ENCODE measurements at regions of chr6 and their contacts with region 1.

Region 1: DNA sequence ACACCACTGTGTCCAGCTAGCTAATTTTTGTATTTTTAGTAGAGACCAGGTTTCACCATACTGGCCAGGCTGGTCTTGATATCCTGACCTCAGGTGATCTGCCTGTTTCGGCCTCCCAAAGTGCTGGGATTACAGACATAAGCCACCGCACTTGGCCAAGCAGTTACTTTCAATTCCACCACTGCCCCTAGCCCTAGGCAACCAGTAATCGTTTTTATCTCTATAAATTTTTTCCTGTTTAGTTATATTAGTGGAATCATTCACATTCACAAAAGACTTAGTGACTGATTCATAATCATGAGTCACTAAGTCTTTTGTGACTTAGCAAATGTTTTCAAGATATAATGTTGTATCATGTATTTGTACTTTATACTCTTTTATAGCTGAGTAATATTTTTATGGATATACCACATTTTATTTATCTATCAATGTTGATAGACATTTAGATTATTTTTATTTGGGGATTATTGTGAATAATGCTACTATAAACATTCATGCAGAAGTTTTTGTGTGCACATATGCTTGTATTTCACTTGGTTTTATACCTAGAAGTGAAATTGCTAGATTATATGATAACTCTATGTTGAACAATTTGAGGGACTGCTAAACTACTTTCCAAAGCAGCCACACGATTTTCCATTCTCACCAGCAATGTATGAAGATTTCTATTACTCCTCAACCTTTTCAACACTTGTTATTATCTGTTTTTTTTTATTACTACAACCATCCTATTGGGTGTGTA is 421.4 kb upstream of the ID4 start:
- DNase-seq: peak; percentile 47
- ATAC-seq: peak; percentile 50
- H3K4me3 ChIP-seq: peak overlapping the region in 1 of 2 experiments; percentile 31; a peak in 2 of 4 replicates
- H3K27ac ChIP-seq: peak overlapping the region; percentile 81
- H3K4me1 ChIP-seq: peaks cover 50 to 70% of the 10 kb centered on the region in 2 experiments
- H3K27me3 ChIP-seq: no peaks in the 10 kb centered on the region
- CTCF ChIP-seq: no peak
- POLR2A ChIP-seq: no peak
- RAD21 ChIP-seq: 0 out of 2 replicates have a peak, but pooled peaks have one; percentile 10

Region 2: GRCh38 chr6:19342616-19343015 is 73.1 kb before region 1 on chr6:
- CTCF ChIA-PET with region 1: no interaction called
- POLR2A ChIA-PET with region 1: no interaction called
- RAD21 ChIA-PET with region 1: no interaction called
- intact Hi-C with region 1: loop called (anchors 5 kb)
- DNase-seq: no peak
- ATAC-seq: no peak
- H3K4me3 ChIP-seq: no peak overlapping the region
- H3K27ac ChIP-seq: no peak overlapping the region
- H3K4me1 ChIP-seq: peaks cover 0 to 16% of the 10 kb centered on the region in 2 experiments; a peak in 2 of 4 replicates
- H3K27me3 ChIP-seq: no peaks in the 10 kb centered on the region
- CTCF ChIP-seq: no peak
- POLR2A ChIP-seq: no peak
- RAD21 ChIP-seq: no peak